ENCODE measurements at regions of chr20 and their contacts with region 1.

Region 1: DNA sequence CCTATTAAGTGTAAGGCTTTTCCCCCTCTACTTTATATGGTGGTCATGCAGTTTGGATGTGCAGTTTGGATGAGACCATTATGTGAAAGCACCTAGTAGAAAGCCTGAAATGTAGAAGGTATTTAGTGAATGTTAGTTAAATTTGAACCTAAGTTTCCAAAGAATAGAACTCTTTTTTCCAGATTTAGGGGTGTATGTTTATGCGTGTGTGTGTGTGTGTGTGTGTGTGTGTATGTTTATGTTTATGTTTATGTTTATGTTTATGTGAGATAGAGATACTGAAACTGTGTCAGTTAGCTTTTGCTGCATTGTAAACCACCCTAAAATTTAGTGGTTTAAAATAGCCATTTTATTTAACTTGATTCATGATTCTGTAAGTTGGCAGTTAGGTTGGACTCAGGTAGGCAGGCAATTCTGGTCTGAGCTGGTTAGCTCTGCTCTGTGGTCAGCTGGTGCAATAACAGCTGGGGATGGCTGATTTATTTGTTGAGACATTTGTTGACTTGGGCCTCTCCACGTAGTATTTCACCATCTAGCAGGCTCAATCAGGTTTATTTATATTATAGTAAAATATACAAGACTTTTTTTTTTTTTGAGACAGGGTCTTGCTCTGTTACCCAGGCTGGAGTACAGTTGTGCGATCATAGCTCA is 54.0 kb downstream of the STK4 start:
- DNase-seq: no peak
- ATAC-seq: no peak
- H3K4me3 ChIP-seq: no peak overlapping the region
- H3K4me3 Mint-ChIP-seq: no peak overlapping the region
- H3K27ac ChIP-seq: no peak overlapping the region
- H3K27ac Mint-ChIP-seq: no peak overlapping the region
- H3K4me1 ChIP-seq: no peaks in the 10 kb centered on the region
- H3K4me1 Mint-ChIP-seq: peaks cover 23% of the 10 kb centered on the region
- H3K27me3 ChIP-seq: no peaks in the 10 kb centered on the region
- H3K27me3 Mint-ChIP-seq: no peaks in the 10 kb centered on the region
- CTCF ChIP-seq: no peak

Region 2: DNA sequence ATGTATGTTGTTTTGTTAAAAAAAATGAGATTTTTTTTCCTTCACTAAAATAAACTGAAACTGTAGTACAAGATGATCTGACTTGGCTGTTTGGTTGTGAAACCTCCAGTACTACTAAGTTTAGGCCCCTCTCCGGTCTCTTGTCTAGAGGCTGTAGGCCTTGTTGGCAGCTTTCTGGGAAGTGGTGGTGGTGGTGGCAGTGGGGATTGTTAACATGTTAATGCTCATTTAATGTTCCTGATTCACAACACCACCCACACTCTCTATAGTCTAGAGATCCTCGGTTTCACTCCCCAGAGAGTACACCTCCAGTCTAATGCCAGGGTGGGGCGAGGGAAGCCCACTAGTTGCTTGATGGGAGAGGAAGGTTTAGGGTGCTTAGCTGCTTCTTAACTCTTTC is 29.9 kb before region 1 on chr20:
- CTCF ChIA-PET with region 1: interaction called, 3 read pairs
- POLR2A ChIA-PET with region 1: no interaction called
- intact Hi-C with region 1: loop called (anchors 5 kb)
- DNase-seq: no peak
- ATAC-seq: peak; percentile 57
- H3K4me3 ChIP-seq: peak overlapping the region in 3 of 5 experiments; percentile 2 to 20 (median 5)
- H3K4me3 Mint-ChIP-seq: peak overlapping the region; percentile 75
- H3K27ac ChIP-seq: peak overlapping the region; percentile 65 to 70
- H3K27ac Mint-ChIP-seq: peak overlapping the region; percentile 82
- H3K4me1 ChIP-seq: peaks cover 16 to 31% of the 10 kb centered on the region in 2 donors
- H3K4me1 Mint-ChIP-seq: peaks cover 61% of the 10 kb centered on the region
- H3K27me3 ChIP-seq: no peaks in the 10 kb centered on the region
- H3K27me3 Mint-ChIP-seq: no peaks in the 10 kb centered on the region
- CTCF ChIP-seq: no peak

Measured in B cell (primary cell).